Esophagus squamous epithelium (tissue), 5 donors: ENCODE measurements at regions of chr1 and their contacts with region 1.

Region 1: GRCh38 chr1:56584910-56585528 is 5.7 kb upstream of the PLPP3 start:
- DNase-seq: no peak
- H3K4me3 ChIP-seq: no peak overlapping the region
- H3K27ac ChIP-seq: no peak overlapping the region
- H3K4me1 ChIP-seq: peaks cover 0 to 3% (median under 1%) of the 10 kb centered on the region in 3 donors
- H3K27me3 ChIP-seq: no peaks in the 10 kb centered on the region
- CTCF ChIP-seq: peak; percentile 60 to 89 (median 74)
- POLR2A ChIP-seq: no peak

Region 2: DNA sequence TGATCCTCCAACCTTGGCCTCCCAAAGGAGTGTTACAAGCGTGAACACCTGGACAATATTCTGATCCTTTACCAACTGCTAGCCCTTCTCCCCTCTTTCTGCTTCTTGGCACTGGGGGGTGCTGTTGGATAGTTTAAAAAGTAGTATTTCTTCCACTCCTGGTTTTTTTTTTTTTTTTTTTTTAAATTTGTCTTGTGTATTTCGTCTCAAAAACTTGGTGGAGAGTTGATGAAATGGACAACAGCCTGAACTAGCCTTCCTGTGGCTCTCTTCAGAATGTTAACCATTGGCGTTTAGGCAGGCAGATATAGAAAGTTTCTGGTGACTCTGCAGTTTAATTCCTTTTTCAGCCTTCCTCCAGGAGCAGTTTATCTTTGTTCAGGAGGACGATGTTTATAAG is 1300.2 kb before region 1 on chr1:
- intact Hi-C with region 1: loop called (anchors 5 kb)
- DNase-seq: no peak
- H3K4me3 ChIP-seq: no peak overlapping the region
- H3K27ac ChIP-seq: peak overlapping the region in 3 of 4 donors; percentile 25 to 72 (median 65)
- H3K4me1 ChIP-seq: peaks cover 8 to 26% (median 8%) of the 10 kb centered on the region in 3 donors
- H3K27me3 ChIP-seq: no peaks in the 10 kb centered on the region
- CTCF ChIP-seq: peak in 5 of 6 experiments; percentile 34 to 65 (median 53)
- POLR2A ChIP-seq: no peak

Region 3: DNA sequence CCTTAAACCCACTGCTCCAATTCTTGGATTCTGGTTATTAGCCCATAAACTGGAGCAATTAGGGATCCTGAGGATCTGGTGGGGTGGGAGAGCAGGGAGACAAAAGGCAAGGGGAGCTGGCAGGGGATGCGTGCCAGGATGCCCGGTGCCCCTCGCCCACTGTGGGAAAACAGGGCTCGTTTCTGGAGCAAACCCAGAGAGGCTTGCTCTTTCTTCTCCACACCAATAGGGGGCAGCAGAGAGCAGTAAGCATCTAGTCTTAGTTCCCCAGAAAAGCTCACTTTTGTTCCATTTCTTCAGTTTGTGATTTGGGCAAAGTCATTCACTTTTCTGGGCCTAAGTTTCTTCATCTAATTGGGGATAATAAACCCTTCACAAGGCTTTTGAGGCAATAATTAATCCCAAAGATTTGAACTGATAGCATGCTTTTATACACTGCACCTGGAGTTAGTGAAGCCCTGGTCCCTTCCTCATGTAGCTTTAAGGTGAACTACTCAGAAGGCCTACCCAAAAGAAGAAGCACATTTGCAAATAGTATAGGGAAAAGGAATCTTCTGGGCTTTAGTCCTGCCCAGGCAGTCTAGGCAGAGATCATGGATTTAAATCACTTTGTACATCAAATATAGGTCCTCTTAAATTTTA is 1209.3 kb before region 1 on chr1:
- intact Hi-C with region 1: loop called (anchors 10 kb)
- DNase-seq: no peak
- H3K4me3 ChIP-seq: no peak overlapping the region
- H3K27ac ChIP-seq: peak overlapping the region in 3 of 4 donors; percentile 46 to 66 (median 56)
- H3K4me1 ChIP-seq: peaks cover 0 to 9% (median 0%) of the 10 kb centered on the region in 3 donors
- H3K27me3 ChIP-seq: no peaks in the 10 kb centered on the region
- CTCF ChIP-seq: peak; percentile 71 to 94 (median 80)
- POLR2A ChIP-seq: no peak